GM10248 (cell line): ENCODE measurements at regions of chr20 and their contacts with region 1.

Region 1: GRCh38 chr20:31630187-31630790 is 7.4 kb upstream of the COX4I2 start:
- DNase-seq: no peak
- CTCF ChIP-seq: no peak

Region 2: DNA sequence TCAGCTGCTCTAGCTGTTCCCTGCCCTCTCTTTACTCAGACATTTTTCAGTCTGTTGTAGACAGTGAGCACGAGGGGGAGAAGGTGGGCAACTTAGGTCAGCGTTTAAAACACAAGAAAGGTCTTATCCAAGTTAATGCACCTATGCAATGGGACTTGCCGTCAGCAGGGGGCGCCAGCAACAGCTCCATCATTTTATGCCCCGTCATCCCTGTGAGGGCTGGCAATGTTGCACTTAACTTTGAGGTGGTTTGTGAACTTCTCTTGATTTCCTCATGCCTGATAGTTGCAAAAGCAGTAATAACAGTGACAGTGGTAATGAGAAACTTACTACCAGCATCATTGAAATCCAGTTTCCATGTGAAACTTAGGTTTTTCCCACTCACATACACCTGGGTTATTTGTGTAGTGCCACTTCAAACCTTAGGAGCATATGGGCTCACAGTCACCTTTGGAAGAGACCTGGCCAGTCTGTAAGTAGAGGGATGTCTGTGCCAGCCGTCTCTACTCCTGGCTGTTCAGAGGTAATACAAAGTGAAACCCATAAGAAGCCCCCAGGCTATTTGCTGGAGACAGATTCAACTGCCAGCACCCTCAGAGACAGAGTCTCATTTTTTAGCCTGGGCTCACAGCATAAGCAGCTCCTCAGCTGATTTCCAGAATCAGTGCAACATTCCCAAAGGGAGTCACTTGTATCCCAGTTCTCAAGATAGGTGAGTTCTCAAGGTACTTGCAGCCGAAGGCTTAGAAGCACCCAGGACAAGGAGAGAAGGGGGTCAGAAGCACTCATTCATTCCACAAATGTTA is 70.0 kb before region 1 on chr20:
- CTCF ChIA-PET with region 1: interaction called, 30 read pairs
- POLR2A ChIA-PET with region 1: no interaction called
- DNase-seq: peak; percentile 71
- CTCF ChIP-seq: peak; percentile 87

Region 3: DNA sequence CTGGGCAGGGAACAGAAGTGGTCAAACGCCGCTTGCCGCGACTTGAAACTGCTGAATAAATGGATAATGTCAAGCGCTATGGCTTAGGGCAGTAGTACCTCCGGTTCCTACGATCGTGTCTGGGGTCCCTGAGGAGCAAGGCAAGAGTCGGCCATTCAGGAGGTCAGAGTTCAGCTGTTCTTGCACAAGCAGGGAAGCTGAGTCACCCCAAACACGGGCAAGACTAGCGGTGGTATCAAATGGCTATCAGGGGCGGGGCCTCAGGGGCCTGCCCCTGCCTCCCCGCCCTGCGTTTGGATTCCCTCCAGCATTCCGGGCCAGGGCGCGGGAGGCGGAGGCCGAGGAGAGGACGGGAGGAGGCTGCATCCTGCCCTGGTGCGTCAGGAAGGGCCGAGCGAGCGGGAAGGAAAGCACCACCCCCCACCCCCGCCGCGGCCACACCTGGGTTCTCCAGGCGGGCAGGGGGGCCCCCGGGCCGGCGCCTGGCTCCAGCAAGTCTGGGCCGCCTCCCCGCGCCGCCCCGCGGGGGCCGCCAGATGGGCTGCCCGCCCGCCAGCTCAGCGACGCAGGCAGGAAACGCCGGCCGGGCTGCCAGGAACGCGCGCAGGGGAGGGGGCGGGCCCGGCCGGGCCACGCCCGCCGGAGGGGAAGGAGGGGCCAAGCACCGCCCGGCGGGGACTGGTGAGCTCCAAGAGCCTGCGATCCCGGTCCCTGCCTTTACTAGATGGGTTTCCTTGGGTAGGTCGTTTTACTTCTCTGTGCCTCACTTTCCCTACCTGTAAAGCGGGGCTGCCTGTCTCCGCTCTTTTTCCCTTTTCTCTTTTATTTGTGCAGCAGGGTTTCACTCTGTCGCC is 57.4 kb before region 1 on chr20:
- CTCF ChIA-PET with region 1: interaction called, 13 read pairs
- POLR2A ChIA-PET with region 1: no interaction called
- DNase-seq: peak; percentile 93
- CTCF ChIP-seq: no peak

Region 4: DNA sequence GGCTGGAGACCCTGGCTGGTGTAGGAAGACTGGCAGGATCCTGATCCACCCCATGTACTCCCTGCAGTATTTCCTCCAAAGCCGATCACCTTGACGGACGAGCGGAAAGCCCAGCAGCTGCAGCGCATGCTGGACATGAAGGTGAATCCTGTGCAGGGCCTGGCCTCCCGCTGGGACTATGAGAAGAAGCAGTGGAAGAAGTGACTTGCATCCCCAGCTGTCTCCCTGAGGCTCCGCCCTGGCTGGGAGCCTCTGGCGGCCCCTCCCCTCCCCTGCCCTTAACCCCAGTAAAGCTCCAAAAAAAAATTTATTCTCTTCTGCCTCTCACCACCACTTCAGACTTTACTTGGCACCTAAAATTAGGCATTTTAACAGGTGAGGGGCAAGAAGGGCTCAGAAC is 14.4 kb after region 1 on chr20:
- CTCF ChIA-PET with region 1: interaction called, 28 read pairs
- POLR2A ChIA-PET with region 1: no interaction called
- DNase-seq: no peak
- CTCF ChIP-seq: no peak

Region 5: DNA sequence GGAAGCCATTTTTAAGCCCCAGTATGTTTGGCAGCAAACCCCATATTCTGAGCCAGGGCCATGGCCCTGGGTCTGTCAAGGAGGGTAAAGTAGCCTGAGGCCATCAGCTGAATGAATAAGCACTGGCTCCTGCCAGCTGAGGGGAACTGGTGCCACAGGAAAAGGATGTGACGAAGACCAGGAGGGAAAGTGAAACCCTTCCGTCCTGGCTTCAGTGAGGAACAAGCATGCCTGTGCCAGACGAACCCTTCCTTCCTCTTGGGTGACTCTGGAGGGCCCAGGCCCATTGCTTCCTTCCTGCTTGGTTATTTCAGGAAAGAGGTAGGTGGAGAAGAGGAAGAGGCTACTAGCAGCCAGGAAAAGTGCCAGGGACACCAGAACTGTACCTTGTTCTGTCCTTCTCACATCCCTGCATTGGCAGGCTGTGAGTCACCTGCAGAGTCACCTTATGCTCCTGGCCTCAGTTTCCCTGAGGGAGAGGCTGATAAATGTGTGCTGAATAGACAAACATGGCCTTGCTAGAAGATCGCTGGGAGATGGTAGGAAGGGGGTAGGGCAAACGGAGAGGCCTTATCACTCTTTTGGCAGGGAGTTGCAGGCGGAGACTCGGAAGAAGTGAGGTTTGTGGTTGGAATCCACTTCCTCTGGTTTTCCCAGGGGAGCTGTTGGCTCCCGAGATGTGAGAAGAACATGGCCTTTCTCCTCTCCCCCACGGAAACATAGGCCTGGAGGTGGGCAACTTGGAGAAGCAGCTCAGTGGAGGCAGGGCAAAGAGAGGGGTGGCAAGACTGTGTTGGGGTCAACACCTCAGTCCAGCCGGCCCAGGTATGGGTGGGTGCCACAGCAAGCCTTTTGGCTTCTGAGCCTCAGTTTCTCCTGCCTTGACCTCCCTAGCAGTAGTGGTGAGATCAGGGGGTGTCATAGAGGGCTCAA is 44.9 kb after region 1 on chr20:
- CTCF ChIA-PET with region 1: interaction called, 11 read pairs
- POLR2A ChIA-PET with region 1: no interaction called
- DNase-seq: peak; percentile 57
- CTCF ChIP-seq: no peak